Activated CD4-positive, alpha-beta memory T cell treated with anti-CD3 and anti-CD28 coated beads, Interleukin-2, amount 10 ng/mL, durations not matched to agents 7 days and 5 days (primary cell): ENCODE measurements at regions of chr2 and their contacts with region 1.

Region 1: GRCh38 chr2:152861349-152861942 is 143.0 kb downstream of the ARL6IP6 start:
- DNase-seq: no peak
- H3K4me3 Mint-ChIP-seq: no peak overlapping the region
- H3K27ac Mint-ChIP-seq: no peak overlapping the region
- H3K4me1 Mint-ChIP-seq: no peaks in the 10 kb centered on the region
- H3K27me3 Mint-ChIP-seq: no peaks in the 10 kb centered on the region

Region 2: GRCh38 chr2:152701198-152701597 is 160.2 kb before region 1 on chr2:
- CTCF ChIA-PET with region 1: no interaction called
- POLR2A ChIA-PET with region 1: no interaction called
- DNase-seq: no peak
- H3K4me3 Mint-ChIP-seq: no peak overlapping the region
- H3K27ac Mint-ChIP-seq: no peak overlapping the region
- H3K4me1 Mint-ChIP-seq: peaks cover 17% of the 10 kb centered on the region
- H3K27me3 Mint-ChIP-seq: no peaks in the 10 kb centered on the region

Region 3: DNA sequence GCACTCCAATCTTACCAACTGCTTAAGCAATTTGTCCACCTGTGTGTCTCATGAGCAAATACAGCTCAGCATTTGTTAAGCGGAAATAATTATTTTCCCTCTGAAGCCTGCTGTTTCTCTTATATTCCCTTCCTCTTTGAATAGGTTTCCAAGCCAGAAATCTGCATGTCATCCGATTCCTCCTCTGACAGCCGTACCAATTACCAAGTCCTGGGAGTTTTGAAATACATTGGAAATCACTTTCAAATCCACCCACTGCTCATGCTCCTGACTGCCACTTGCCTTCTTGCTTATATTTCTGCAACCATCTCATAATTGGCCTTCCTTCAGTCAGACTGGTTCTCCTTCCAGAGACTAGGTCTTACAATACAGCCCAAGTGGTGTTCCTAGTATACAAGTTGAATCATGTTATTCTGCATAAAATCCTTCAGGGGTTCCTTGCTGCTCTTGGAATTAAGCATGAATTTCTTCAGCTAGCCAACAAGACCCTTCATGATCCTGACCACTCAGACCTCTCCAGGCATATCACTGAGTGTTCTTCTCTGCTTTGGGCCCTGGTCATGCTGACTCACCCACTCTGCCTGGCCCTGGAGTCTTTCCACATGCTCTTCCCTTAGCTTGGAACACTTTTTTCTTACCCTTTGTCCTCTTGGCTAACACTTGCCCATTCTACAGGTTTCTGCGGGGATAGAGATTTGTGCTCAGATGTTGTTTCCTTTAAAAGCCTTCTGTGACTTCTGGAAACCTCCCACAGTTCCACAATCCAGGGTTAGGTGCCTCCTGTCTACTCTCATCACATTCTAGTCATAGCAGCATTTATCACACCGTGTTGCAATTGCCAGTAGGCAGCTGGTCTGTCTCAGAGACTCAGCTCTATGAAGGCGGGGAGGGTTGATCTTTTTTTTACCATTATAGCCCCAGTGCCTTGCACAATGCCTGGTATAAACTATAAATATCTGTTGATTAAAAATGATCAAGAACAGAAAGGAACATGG is 14.6 kb after region 1 on chr2:
- CTCF ChIA-PET with region 1: interaction called, 19 read pairs
- POLR2A ChIA-PET with region 1: no interaction called
- DNase-seq: no peak
- H3K4me3 Mint-ChIP-seq: no peak overlapping the region
- H3K27ac Mint-ChIP-seq: no peak overlapping the region
- H3K4me1 Mint-ChIP-seq: no peaks in the 10 kb centered on the region
- H3K27me3 Mint-ChIP-seq: no peaks in the 10 kb centered on the region